PC-3 (cell line): ENCODE measurements at regions of chr1 and their contacts with region 1.

Region 1: DNA sequence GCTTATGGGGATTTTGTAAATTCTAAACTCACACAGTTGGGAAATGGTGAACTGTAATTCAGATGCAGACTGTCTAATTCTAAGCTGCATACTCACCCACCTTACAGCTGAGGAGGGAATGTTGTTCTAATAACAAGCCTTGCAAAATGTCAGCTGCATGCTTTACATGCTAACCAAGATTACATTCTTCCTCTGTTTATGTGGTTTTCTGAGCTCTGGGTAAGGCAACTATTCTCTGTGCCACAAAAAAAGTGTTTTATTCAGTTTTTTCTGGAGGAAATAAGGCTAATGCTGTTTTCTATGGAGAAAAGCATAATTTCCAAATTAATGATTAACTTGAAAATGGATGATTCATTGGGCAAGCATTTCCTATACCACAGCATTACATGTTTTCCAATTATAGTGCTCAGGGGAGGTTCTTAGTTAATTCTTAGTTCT is 64.9 kb downstream of the RGS13 start:
- DNase-seq: peak; percentile 73
- ATAC-seq: peak; percentile 41
- H3K4me3 ChIP-seq: peak overlapping the region; percentile 32; the same call in 1 of the 2 replicates
- H3K27ac ChIP-seq: peak overlapping the region; percentile 83
- H3K4me1 ChIP-seq: peaks cover 41% of the 10 kb centered on the region
- H3K27me3 ChIP-seq: no peaks in the 10 kb centered on the region
- CTCF ChIP-seq: no peak

Region 2: GRCh38 chr1:192724670-192725069 is 23.8 kb after region 1 on chr1:
- CTCF ChIA-PET with region 1: no interaction called
- POLR2A ChIA-PET with region 1: no interaction called
- intact Hi-C with region 1: no loop called
- DNase-seq: peak; percentile 85
- ATAC-seq: peak; percentile 97
- H3K4me3 ChIP-seq: no peak overlapping the region
- H3K27ac ChIP-seq: peak overlapping the region; percentile 44
- H3K4me1 ChIP-seq: peaks cover 11% of the 10 kb centered on the region
- H3K27me3 ChIP-seq: no peaks in the 10 kb centered on the region
- CTCF ChIP-seq: no peak

Region 3: GRCh38 chr1:192766009-192766625 is 65.3 kb after region 1 on chr1:
- CTCF ChIA-PET with region 1: no interaction called
- POLR2A ChIA-PET with region 1: no interaction called
- intact Hi-C with region 1: loop called (anchors 10 kb)
- DNase-seq: peak; percentile 70
- ATAC-seq: peak; percentile 84
- H3K4me3 ChIP-seq: no peak overlapping the region
- H3K27ac ChIP-seq: no peak overlapping the region
- H3K4me1 ChIP-seq: peaks cover 32% of the 10 kb centered on the region
- H3K27me3 ChIP-seq: no peaks in the 10 kb centered on the region
- CTCF ChIP-seq: no peak

Region 4: DNA sequence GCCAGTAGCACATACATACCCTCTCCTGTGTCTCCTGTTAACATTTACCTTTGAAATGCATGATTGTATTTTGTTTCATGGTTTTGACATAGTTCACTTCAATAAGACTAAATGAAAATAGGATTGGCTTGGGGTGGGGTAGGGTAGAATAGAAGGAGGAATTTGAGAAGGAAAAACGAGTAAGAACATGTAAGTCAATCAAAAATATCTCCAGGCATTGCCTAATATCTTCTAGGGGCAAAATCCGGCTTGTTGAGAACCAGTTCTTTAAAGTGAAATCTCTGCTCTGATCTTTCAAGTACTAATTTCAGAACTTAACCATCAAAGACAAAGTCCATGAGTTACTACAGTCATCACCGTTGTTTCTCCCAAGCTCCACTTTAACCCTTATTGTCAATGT is 76.2 kb after region 1 on chr1:
- CTCF ChIA-PET with region 1: no interaction called
- POLR2A ChIA-PET with region 1: no interaction called
- intact Hi-C with region 1: no loop called
- DNase-seq: no peak
- ATAC-seq: no peak
- H3K4me3 ChIP-seq: no peak overlapping the region
- H3K27ac ChIP-seq: no peak overlapping the region
- H3K4me1 ChIP-seq: no peaks in the 10 kb centered on the region
- H3K27me3 ChIP-seq: no peaks in the 10 kb centered on the region
- CTCF ChIP-seq: no peak

Region 5: GRCh38 chr1:192887426-192887825 is 186.6 kb after region 1 on chr1:
- CTCF ChIA-PET with region 1: no interaction called
- POLR2A ChIA-PET with region 1: no interaction called
- intact Hi-C with region 1: no loop called
- DNase-seq: no peak
- ATAC-seq: no peak
- H3K4me3 ChIP-seq: no peak overlapping the region
- H3K27ac ChIP-seq: no peak overlapping the region
- H3K4me1 ChIP-seq: no peaks in the 10 kb centered on the region
- H3K27me3 ChIP-seq: no peaks in the 10 kb centered on the region
- CTCF ChIP-seq: no peak